ENCODE measurements at regions of chr7 and their contacts with region 1.

Region 1: DNA sequence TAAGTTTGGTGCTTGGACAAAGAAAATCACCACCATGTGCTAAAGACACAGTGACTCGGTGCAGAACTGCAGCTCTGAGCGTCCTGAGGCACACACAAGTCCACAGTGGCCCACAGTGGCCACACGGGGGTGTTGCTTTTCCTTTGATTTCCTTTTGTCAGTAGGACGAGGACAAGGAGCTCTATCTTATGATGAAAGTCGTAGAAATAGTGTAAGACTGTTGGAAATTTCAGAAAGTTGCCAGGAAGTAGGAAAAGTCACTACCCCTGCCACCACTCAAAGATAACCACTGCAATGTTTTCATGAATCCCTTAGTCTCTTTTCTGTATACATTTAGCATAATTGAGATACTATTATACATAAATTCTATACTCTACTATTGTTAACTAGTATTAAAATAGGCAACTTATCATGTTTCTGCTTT is 146.0 kb downstream of the TNS3 start:
- DNase-seq: peak; percentile 59
- H3K4me3 ChIP-seq: no peak overlapping the region
- CTCF ChIP-seq: peak; percentile 75

Region 2: GRCh38 chr7:47453093-47454049 is 17.5 kb after region 1 on chr7:
- CTCF ChIA-PET with region 1: interaction called, 11 read pairs
- POLR2A ChIA-PET with region 1: no interaction called
- DNase-seq: peak; percentile 71
- H3K4me3 ChIP-seq: no peak overlapping the region; the same call in 1 of the 2 replicates
- CTCF ChIP-seq: no peak

Region 3: DNA sequence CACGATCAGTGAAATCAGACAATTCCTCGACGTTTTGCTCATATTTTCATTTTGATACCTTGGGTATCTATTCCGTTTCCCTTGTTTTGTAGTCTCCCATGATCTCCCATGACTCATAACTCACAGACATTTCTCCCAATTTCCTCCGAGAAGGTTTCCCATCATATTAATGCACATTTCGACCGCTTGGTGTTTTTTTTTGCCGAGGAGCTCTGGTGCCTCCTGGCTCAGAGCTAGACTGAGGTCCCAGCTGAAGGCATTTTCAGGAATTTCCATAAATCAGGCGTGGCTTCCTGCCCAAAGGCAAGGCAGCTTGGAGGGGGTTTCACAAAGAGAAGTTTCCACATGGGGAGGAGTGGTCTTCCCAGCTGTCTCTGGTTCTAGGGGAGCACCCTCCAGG is 294.2 kb after region 1 on chr7:
- CTCF ChIA-PET with region 1: no interaction called
- POLR2A ChIA-PET with region 1: no interaction called
- DNase-seq: no peak
- H3K4me3 ChIP-seq: no peak overlapping the region
- CTCF ChIP-seq: no peak

Region 4: GRCh38 chr7:47786557-47787248 is 350.8 kb after region 1 on chr7:
- CTCF ChIA-PET with region 1: interaction called, 14 read pairs
- POLR2A ChIA-PET with region 1: no interaction called
- DNase-seq: peak; percentile 98
- H3K4me3 ChIP-seq: no peak overlapping the region
- CTCF ChIP-seq: no peak

Region 5: GRCh38 chr7:47818796-47819606 is 383.1 kb after region 1 on chr7:
- CTCF ChIA-PET with region 1: interaction called, 37 read pairs
- POLR2A ChIA-PET with region 1: no interaction called
- DNase-seq: peak; percentile 23
- H3K4me3 ChIP-seq: no peak overlapping the region
- CTCF ChIP-seq: peak; percentile 85

Measured in AG04449 (cell line).